PC-9 (cell line): ENCODE measurements at regions of chr6 and their contacts with region 1.

Region 1: DNA sequence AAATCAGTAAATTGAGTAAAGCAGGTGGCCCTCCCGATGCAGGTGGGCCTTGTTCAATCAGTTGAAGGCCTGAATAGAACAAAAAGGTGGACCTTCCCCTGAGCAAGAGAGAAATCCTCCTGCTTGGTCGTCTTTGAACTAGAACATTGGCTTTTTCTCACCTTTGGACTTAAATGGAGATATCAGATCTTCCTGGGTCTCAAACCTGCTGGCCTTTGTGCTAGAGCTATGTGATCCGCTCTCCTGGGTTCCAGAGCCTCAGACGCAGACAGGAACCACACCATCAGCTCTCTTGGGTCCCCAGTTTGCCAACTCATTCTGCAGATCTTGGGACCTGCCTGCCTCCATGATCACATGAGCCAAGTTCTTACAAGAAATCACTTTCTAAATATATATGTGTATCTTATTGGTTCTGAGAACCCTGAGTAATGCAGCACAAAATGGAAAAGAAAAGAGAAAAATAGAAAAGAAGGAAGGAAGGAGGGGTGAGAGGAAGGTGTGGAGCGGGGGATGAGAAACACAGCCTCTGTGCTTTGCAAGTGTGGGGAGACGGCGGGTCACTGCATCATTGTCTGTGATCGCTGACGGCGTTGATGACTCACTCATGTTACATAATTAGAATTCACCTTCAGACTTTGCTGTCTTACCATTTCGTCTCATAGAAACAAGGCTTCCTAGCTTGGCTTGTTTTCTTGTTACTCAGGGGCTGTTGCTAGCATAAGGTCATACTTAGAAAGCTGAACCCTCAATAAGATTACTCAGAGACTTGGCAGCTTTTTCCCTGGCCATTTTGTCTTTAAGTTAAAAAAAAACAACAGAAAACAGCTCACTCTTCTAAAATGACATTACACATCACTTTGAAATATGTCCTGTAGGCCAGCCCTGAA is 85.7 kb upstream of the NEDD9 start:
- DNase-seq: peak; percentile 84 to 96
- H3K4me3 ChIP-seq: peak overlapping the region; percentile 24; the same call in 1 of the 2 replicates
- H3K27ac ChIP-seq: peak overlapping the region; percentile 85
- H3K4me1 ChIP-seq: peaks cover 34% of the 10 kb centered on the region
- H3K27me3 ChIP-seq: no peaks in the 10 kb centered on the region
- CTCF ChIP-seq: no peak

Region 2: GRCh38 chr6:11093589-11094410 is 224.3 kb before region 1 on chr6 and contains the start of gene SMIM13:
- CTCF ChIA-PET with region 1: no interaction called
- POLR2A ChIA-PET with region 1: no interaction called
- intact Hi-C with region 1: loop called (anchors 2 kb)
- DNase-seq: peak; percentile 88 to 96
- H3K4me3 ChIP-seq: peak within 1 kb of the TSS; percentile 76
- H3K27ac ChIP-seq: peak within 1 kb of the TSS; percentile 64
- H3K4me1 ChIP-seq: 0 out of 2 replicates have a peak, but pooled peaks cover 8% of the 10 kb centered on the region
- H3K27me3 ChIP-seq: no peaks in the 10 kb centered on the region
- CTCF ChIP-seq: peak; percentile 56
- total RNA-seq, gene SMIM13: 16.7 and 22.2 TPM in 2 replicates

Region 3: DNA sequence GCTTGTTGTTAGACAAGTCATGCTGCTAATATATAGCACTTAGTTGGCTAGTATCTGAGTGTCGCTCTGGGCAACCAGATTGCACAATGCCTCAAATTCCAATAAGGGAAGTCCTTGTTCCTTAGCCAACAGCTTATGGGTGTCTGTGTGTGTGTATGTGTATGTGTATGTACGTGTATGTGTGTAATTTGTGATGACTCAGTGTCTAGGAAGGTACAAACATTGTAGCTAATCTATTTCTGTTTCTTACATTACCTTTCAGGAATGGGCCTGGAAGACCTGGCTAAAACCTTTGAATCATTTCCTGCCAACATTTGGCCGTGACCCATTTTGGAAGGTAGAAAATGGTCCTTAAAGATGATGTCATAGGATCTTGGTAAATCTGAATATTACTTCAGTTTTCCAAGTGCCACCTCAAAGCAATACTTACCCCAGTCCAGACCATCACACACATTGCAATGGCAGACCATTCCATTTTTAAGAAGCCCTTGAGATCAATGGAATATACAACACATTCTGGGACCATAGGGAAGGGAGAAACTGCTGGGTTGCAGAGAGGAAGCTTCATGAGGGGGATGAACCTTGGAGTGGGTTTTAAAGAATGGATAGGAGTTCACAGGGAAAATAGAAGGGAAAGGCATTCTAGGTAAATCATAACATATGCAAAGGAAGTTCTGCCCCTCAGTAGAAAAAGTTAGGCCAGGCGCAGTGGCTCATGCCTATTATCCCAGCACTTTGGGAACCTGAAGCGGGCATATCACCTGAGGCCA is 110.7 kb before region 1 on chr6:
- CTCF ChIA-PET with region 1: no interaction called
- POLR2A ChIA-PET with region 1: no interaction called
- intact Hi-C with region 1: loop called (anchors 1 kb)
- DNase-seq: peak; percentile 84 to 98
- H3K4me3 ChIP-seq: no peak overlapping the region; the same call in 1 of the 2 replicates
- H3K27ac ChIP-seq: peak overlapping the region; percentile 92
- H3K4me1 ChIP-seq: peaks cover 36% of the 10 kb centered on the region
- H3K27me3 ChIP-seq: no peaks in the 10 kb centered on the region
- CTCF ChIP-seq: no peak

Region 4: DNA sequence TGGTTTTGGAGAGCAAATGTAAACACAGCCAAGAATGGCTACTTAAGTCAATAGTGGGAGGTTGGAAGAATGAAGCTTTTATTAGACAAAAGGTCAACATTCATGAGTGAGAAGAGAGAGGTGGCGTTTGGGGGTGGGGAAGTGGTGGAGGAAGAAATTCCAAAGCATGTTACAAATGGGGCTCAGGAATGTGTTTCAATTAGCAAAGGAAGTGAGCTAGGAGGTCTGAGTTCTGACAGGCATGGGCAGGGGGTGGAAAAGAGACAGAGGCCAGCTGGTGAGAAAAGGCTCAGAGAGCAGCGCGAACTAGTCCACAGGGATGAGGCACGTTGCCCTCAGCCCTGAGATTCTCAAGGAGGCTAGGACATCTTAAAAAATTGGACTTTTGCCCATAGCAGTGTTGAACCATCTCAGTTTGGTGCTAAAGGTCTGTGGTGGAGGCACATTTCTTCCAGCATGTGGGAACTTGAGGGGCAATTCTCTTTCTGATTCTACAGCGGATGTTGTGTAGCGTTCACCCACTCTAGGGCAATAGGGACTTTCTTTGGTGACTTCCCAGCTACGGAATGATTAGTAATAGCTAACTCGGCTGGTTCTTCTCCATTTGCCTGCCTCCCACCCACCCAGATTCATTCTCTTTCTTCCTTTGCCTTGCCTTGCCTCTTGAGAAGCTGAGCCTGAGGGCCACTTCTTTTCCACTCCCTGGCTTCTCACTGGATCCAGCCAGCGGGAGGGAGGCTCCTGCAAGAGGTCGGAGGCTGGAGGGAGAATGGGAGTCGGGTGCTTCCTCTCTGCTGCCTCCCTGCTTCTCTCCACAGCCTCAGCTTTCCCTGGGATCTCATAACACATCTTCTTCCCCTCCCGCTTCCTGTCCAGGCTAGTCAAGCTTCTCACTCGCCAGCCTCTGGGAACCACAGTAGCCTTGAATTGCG is 40.6 kb before region 1 on chr6:
- CTCF ChIA-PET with region 1: no interaction called
- POLR2A ChIA-PET with region 1: interaction called, 4 read pairs
- intact Hi-C with region 1: loop called (anchors 1 kb)
- DNase-seq: peak; percentile 56 to 63
- H3K4me3 ChIP-seq: no peak overlapping the region
- H3K27ac ChIP-seq: no peak overlapping the region
- H3K4me1 ChIP-seq: peaks cover 10% of the 10 kb centered on the region; the same call in 1 of the 2 replicates
- H3K27me3 ChIP-seq: no peaks in the 10 kb centered on the region
- CTCF ChIP-seq: no peak

Region 5: DNA sequence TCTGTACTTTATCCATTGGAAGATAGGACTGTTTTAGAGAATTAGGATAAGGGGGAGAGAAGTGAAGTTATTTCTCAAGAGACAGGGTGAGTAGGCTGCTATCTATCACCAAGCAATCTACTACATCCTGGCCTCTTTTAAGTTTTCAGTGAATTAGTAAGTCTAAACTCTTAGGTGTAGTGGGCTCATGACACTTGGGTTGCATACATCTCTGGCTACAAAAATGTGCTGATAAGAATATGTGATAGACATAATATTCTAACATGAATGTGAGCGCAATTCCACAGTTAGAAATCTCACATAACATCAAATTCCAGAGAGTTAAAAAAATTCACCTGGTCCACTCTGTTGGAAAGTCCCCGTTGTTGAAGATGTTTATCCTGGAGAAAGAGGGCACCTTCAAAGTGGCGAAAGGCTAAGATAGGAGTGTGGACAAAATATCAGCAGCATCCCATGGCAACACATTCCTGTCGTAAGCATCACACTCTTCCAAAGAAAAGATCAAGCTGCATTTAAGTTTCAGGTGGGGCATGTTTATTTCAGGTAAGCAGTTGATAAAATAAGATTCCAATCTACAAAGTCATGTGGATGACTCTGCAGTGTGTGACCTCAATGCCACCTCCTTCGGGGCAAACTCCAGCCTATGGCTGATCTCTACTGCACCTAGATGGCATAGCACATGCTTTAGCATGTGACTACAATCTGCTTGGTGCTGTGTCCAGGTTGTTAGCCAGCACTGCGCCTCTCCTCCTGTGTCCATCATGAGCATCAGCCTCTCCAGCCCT is 26.0 kb after region 1 on chr6:
- CTCF ChIA-PET with region 1: interaction called, 10 read pairs
- POLR2A ChIA-PET with region 1: interaction called, 4 read pairs
- intact Hi-C with region 1: loop called (anchors 1 kb)
- DNase-seq: peak; percentile 85 to 98
- H3K4me3 ChIP-seq: no peak overlapping the region
- H3K27ac ChIP-seq: peak overlapping the region; percentile 82
- H3K4me1 ChIP-seq: peaks cover 45% of the 10 kb centered on the region
- H3K27me3 ChIP-seq: no peaks in the 10 kb centered on the region
- CTCF ChIP-seq: no peak

Region 6: DNA sequence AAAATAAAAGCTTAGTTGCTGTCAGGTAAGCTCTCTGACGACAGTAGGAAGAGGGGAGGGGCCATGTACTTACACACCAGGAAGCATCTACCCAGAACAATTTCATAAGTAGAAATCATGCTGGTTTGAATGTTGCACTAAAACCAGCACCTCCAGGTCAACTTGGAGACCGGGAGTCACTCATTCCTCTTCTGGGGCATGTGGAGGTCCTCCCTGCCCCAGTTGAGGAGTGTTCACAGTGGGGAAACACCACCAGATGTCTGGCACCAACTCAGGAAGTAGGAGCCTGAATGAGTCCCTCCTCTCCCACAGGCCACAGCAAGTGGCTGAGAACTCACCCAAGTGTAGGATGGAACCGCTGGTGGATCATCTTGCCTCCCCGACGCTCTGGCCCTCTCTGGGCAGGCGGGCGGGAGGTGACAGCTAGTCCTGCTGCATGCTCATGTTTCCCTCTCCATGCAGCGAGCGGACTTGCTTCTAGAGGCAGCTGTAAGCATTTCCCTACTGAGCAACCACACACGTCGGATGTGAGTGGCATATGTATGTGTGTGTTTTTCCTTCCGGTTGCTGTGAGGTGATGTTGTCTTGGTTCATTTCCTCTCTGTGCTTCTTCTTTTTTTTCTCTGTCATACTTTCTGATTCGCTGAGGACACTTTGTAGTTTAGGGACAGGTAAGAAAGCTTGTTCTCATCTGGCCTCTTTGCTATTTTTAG is 63.8 kb after region 1 on chr6:
- CTCF ChIA-PET with region 1: no interaction called
- POLR2A ChIA-PET with region 1: interaction called, 14 read pairs
- intact Hi-C with region 1: no loop called
- DNase-seq: no peak
- H3K4me3 ChIP-seq: no peak overlapping the region
- H3K27ac ChIP-seq: no peak overlapping the region
- H3K4me1 ChIP-seq: no peaks in the 10 kb centered on the region
- H3K27me3 ChIP-seq: no peaks in the 10 kb centered on the region
- CTCF ChIP-seq: no peak

Region 7: DNA sequence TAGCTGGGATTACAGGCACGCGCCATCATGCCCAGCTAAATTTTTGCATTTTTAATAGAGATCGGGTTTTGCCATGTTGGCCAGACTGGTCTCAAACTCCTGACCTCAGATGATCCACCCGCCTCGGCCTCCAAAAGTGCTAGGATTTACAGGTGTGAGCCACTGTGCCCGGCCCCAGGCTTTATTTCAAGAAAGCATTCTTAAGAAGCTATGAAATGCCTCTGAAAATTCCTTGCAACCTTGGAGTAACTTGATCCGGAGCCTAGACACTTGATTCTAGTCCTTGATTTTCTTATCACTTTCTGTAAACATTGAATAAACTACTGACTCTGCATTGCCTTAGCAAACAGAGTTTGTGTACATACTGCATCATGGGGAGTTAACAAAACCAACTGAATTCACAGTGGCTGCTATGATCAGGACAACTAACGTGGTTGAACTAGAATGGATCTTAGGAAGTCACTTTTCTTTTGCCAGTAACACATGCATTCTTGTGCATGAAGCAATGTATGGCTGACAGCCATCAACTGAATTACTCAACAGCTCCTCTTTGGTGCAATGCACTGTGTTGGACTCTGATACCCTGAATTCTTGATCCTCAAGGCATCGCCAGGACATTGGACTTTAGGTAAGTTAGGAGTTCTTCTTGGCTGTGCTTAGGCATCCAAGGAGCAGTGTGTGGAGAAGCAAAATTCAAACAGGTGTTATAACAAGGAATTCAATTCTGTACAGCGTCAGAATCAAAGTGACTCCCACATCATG is 116.6 kb after region 1 on chr6:
- CTCF ChIA-PET with region 1: no interaction called
- POLR2A ChIA-PET with region 1: no interaction called
- intact Hi-C with region 1: loop called (anchors 1 kb)
- DNase-seq: peak; percentile 79 to 98
- H3K4me3 ChIP-seq: no peak overlapping the region
- H3K27ac ChIP-seq: peak overlapping the region; percentile 87
- H3K4me1 ChIP-seq: peaks cover 52% of the 10 kb centered on the region
- H3K27me3 ChIP-seq: no peaks in the 10 kb centered on the region
- CTCF ChIP-seq: no peak

Region 8: GRCh38 chr6:11754625-11755271 is 436.6 kb after region 1 on chr6:
- CTCF ChIA-PET with region 1: no interaction called
- POLR2A ChIA-PET with region 1: no interaction called
- intact Hi-C with region 1: no loop called
- DNase-seq: no peak
- H3K4me3 ChIP-seq: no peak overlapping the region
- H3K27ac ChIP-seq: no peak overlapping the region
- H3K4me1 ChIP-seq: peaks cover 3% of the 10 kb centered on the region; the same call in 1 of the 2 replicates
- H3K27me3 ChIP-seq: no peaks in the 10 kb centered on the region
- CTCF ChIP-seq: no peak